ENCODE measurements at regions of chr7 and their contacts with region 1.

Region 1: DNA sequence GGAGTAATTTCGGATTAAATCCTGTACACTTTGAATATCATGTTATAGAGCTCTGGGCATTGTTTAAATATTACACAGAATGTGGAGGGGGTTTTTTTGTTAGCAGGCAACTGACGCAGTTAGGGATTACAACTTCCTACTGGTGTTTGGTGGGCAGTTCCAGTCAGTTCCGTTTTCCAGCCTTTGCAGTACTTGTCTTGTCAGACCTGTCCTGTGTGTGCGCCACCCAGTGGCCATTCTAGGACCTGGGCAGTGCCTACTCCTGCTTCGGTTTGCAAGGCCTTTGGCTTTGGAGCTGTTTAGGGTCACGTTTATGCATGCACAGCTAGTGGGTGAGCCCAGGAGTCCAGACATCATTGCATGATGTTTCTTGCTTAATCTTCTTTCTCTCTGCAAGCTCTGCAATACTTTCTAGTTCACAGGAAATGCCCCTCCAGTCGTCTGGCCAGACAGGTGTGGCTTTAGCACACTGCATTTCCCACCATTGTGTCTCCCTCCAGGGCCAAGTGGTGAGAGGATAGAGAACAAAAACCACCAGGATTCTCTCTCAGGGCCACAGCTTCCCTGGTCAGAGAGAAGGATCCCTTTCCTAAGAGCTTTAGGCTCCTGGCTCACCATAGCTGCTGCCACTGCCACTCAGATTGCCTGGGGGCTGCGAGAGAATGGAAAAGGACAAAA is 96.5 kb upstream of the TARP start:
- DNase-seq: peak; percentile 77 to 90
- ATAC-seq: peak; percentile 85 to 89 (median 86)
- H3K4me3 ChIP-seq: no peak overlapping the region
- H3K4me3 Mint-ChIP-seq: peak overlapping the region; percentile 75
- H3K27ac ChIP-seq: peak overlapping the region; percentile 68
- H3K27ac Mint-ChIP-seq: peak overlapping the region; percentile 91 to 92
- H3K4me1 ChIP-seq: peaks cover 35% of the 10 kb centered on the region
- H3K4me1 Mint-ChIP-seq: peaks cover 52 to 55% of the 10 kb centered on the region in 2 donors
- H3K27me3 ChIP-seq: no peaks in the 10 kb centered on the region
- H3K27me3 Mint-ChIP-seq: no peaks in the 10 kb centered on the region
- CTCF ChIP-seq: peak; percentile 85

Region 2: DNA sequence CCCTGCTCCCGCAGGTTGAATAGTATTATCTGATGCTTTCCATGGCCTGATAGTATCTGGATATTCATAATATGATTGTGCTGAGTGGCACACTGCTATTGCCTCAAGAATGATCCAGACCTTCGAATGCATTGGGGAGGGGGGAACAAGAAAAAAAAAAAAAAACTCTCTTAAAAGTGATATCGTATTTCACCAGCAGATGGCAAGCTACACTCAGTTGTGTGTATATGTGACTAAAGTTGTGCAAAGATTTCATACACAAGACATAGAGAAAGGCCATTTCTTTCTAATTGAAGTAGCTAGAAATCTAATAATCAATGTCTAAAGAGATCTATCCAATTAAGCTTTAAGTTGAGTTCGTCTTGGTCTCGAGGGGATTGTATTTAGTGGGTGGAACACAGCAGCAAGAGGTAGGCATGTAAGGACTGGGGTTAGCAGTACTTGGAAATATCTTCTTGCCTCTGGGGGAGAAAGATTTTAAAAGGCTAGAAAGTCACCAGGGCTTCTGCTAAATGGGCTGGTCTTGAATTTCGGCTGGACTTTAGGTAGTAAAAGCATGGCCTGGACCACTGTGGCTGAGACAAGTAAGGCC is 468.6 kb before region 1 on chr7:
- intact Hi-C with region 1: loop called (anchors 5 kb)
- DNase-seq: peak in 1 of 2 donors; percentile 34
- ATAC-seq: peak in 2 of 3 donors; percentile 35 to 54
- H3K4me3 ChIP-seq: no peak overlapping the region
- H3K4me3 Mint-ChIP-seq: no peak overlapping the region
- H3K27ac ChIP-seq: no peak overlapping the region
- H3K27ac Mint-ChIP-seq: no peak overlapping the region
- H3K4me1 ChIP-seq: no peaks in the 10 kb centered on the region
- H3K4me1 Mint-ChIP-seq: no peaks in the 10 kb centered on the region
- H3K27me3 ChIP-seq: no peaks in the 10 kb centered on the region
- H3K27me3 Mint-ChIP-seq: peaks cover 0 to 2% of the 10 kb centered on the region in 2 donors
- CTCF ChIP-seq: peak; percentile 55

Region 3: GRCh38 chr7:37916673-37917660 is 453.0 kb before region 1 on chr7 and contains the start of gene SFRP4:
- intact Hi-C with region 1: loop called (anchors 5 kb)
- DNase-seq: peak; percentile 16 to 21
- ATAC-seq: peak in 2 of 3 donors; percentile 25 to 38
- H3K4me3 ChIP-seq: no peak within 1 kb of the TSS
- H3K4me3 Mint-ChIP-seq: peak within 1 kb of the TSS; percentile 67
- H3K27ac ChIP-seq: no peak within 1 kb of the TSS
- H3K27ac Mint-ChIP-seq: no peak within 1 kb of the TSS
- H3K4me1 ChIP-seq: peaks cover 26% of the 10 kb centered on the region
- H3K4me1 Mint-ChIP-seq: peaks cover 28 to 29% of the 10 kb centered on the region in 2 donors
- H3K27me3 ChIP-seq: peaks cover 20% of the 10 kb centered on the region
- H3K27me3 Mint-ChIP-seq: peaks cover 27 to 70% of the 10 kb centered on the region in 2 donors
- CTCF ChIP-seq: peak; percentile 61
- total RNA-seq, gene SFRP4: 0.09 TPM in 1 of 3 donors, not detected in the others

Region 4: GRCh38 chr7:38198366-38198765 is 171.6 kb before region 1 on chr7:
- intact Hi-C with region 1: no loop called
- DNase-seq: no peak
- ATAC-seq: no peak
- H3K4me3 ChIP-seq: no peak overlapping the region
- H3K4me3 Mint-ChIP-seq: no peak overlapping the region
- H3K27ac ChIP-seq: no peak overlapping the region
- H3K27ac Mint-ChIP-seq: no peak overlapping the region
- H3K4me1 ChIP-seq: no peaks in the 10 kb centered on the region
- H3K4me1 Mint-ChIP-seq: peaks cover 30 to 33% of the 10 kb centered on the region in 2 donors
- H3K27me3 ChIP-seq: no peaks in the 10 kb centered on the region
- H3K27me3 Mint-ChIP-seq: no peaks in the 10 kb centered on the region
- CTCF ChIP-seq: no peak

Region 5: DNA sequence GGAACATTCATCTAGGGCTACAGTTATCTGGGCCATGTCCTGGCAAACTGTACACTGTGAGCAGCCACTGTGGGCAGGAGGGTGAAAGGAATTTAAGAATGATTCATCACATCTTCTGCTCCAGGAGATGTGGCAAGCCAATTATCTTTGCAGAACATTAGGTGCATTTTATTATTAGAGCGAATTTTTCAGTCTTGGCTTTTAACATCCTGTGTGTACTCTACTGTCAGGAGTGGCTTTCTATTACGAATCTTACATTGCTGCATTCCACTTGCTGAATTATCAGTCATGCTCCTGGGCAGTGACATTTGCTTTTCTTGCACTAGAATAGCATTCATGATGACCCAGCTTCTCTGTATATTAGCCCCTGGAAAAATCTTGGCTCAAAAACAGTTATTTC is 12.7 kb after region 1 on chr7:
- intact Hi-C with region 1: no loop called
- DNase-seq: no peak
- ATAC-seq: no peak
- H3K4me3 ChIP-seq: no peak overlapping the region
- H3K4me3 Mint-ChIP-seq: no peak overlapping the region
- H3K27ac ChIP-seq: no peak overlapping the region
- H3K27ac Mint-ChIP-seq: no peak overlapping the region
- H3K4me1 ChIP-seq: no peaks in the 10 kb centered on the region
- H3K4me1 Mint-ChIP-seq: peaks cover 14 to 16% of the 10 kb centered on the region in 2 donors
- H3K27me3 ChIP-seq: no peaks in the 10 kb centered on the region
- H3K27me3 Mint-ChIP-seq: no peaks in the 10 kb centered on the region
- CTCF ChIP-seq: no peak

Region 6: GRCh38 chr7:38411404-38411803 is 41.4 kb after region 1 on chr7:
- intact Hi-C with region 1: no loop called
- DNase-seq: peak in 1 of 2 donors; percentile 25
- ATAC-seq: no peak
- H3K4me3 ChIP-seq: no peak overlapping the region
- H3K4me3 Mint-ChIP-seq: no peak overlapping the region
- H3K27ac ChIP-seq: no peak overlapping the region
- H3K27ac Mint-ChIP-seq: no peak overlapping the region
- H3K4me1 ChIP-seq: no peaks in the 10 kb centered on the region
- H3K4me1 Mint-ChIP-seq: peaks cover 0 to 10% of the 10 kb centered on the region in 2 donors
- H3K27me3 ChIP-seq: no peaks in the 10 kb centered on the region
- H3K27me3 Mint-ChIP-seq: peaks cover 0 to 6% of the 10 kb centered on the region in 2 donors
- CTCF ChIP-seq: no peak

Region 7: DNA sequence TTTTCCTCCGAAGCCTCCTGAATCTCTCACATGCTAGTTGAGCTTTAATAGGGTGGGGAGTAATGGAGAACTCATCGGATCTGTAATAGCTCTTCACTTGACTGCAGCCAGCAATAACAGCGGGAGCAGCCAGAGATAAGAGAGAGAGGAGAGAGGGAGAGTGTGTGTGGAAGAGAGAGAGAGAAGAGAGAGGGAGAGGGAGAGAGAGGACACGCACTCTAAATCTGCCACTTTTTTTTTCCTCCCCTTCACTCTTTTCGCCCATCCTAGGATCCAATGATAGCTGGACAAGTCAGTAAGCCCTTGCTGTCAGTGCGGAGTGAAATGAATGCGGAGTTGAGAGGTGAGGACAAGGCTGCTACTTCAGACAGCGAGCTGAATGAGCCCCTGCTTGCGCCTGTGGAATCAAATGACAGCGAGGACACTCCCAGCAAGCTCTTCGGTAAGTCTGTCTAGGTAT is 715.7 kb after region 1 on chr7:
- intact Hi-C with region 1: no loop called
- DNase-seq: no peak
- ATAC-seq: no peak
- H3K4me3 ChIP-seq: no peak overlapping the region
- H3K4me3 Mint-ChIP-seq: no peak overlapping the region
- H3K27ac ChIP-seq: no peak overlapping the region
- H3K27ac Mint-ChIP-seq: no peak overlapping the region
- H3K4me1 ChIP-seq: no peaks in the 10 kb centered on the region
- H3K4me1 Mint-ChIP-seq: no peaks in the 10 kb centered on the region
- H3K27me3 ChIP-seq: no peaks in the 10 kb centered on the region
- H3K27me3 Mint-ChIP-seq: peaks cover 13 to 31% of the 10 kb centered on the region in 2 donors
- CTCF ChIP-seq: no peak